Activated T-helper 1 cell treated with anti-CD3 and anti-CD28 coated beads, Interleukin-12 subunit alpha, Interleukin-12 subunit beta, Interleukin-2, Interleukin-4 antibody, amounts not matched to agents 30 ng/mL and 10 ng/mL and 1 ng/mL, durations not matched to agents 14 hours and 24 hours and 36 hours (primary cell): ENCODE measurements at regions of chr13 and their contacts with region 1.

Region 1: DNA sequence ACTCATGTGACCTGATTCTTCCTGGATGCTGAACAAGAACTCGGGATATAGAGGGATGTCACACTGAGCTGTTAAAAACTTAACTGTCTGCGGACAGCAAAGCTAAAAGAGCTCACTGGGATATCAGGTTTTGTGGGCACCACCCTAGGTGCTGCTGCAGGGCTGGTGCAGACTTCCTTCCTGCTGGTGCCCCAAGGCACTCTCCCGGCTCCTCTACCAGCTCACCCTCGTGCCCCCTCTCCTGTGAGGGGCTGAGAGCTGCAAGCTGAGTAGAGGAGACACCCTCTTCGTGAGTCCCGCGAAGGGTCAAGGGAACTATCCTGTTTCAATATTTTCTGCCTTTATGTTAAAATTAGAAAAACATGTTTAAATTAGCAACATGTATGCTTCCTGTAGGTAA is 1475.7 kb downstream of the EFNB2 start:
- DNase-seq: no peak
- H3K4me3 Mint-ChIP-seq: no peak overlapping the region
- H3K27ac Mint-ChIP-seq: no peak overlapping the region
- H3K4me1 Mint-ChIP-seq: no peaks in the 10 kb centered on the region
- H3K27me3 Mint-ChIP-seq: no peaks in the 10 kb centered on the region

Region 2: GRCh38 chr13:104043184-104043583 is 1016.6 kb before region 1 on chr13:
- intact Hi-C with region 1: no loop called
- DNase-seq: no peak
- H3K4me3 Mint-ChIP-seq: no peak overlapping the region
- H3K27ac Mint-ChIP-seq: no peak overlapping the region
- H3K4me1 Mint-ChIP-seq: no peaks in the 10 kb centered on the region
- H3K27me3 Mint-ChIP-seq: no peaks in the 10 kb centered on the region

Region 3: DNA sequence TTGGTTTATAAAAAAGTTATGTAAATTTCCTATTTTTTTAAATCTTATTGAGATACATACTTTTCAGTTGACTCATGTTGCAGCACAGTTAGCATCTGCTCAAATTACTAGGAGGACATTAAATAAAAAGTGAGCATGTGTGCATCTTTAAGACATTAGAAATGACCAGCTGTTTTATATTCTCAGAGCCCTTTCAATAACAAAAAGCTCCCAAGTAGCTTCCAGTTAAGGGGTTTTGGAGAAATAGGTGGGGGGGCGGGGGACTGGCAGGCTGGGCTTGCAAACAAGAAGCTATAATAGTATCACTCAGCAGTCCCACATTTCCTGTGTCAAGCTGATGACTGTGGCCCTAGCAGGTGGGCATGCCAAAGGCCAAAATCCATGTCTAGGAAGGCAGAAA is 280.5 kb before region 1 on chr13:
- intact Hi-C with region 1: no loop called
- DNase-seq: no peak
- H3K4me3 Mint-ChIP-seq: no peak overlapping the region
- H3K27ac Mint-ChIP-seq: no peak overlapping the region
- H3K4me1 Mint-ChIP-seq: no peaks in the 10 kb centered on the region
- H3K27me3 Mint-ChIP-seq: no peaks in the 10 kb centered on the region

Region 4: DNA sequence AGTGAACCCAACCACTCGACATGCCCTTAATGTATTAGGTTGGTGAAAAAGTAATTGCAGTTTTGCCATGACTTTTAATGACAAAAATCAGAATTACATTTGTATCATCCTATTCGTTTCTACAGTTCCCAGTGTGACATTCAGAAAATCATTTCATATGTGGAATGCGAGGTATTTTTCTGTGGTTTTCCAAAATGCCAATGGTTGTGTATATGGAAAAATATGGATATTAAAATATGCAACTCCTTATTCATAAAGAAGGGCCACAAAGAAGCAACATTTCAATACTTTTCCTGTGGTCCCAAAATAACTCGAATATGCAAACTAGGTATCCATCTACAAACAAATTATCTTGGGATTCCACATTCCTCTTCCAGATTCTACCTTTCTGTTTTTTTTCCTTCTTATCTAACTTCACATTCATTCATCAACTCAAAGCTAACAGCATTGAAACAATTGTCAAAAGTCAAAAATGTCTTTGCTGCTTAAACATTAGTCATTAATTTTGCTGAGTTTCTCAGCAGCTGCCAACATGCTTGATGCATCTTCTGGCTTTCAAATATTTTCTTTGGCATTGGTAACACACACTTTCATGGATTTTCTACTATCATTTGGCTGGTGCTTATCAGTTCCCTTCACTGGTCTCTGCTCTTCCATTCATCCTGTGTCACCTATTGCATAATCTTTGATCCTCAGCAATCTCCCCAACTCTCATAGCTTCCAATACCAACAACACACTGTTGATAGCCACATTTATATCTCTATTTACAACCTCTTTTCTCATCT is 30.3 kb after region 1 on chr13:
- intact Hi-C with region 1: loop called (anchors 1 kb)
- DNase-seq: no peak
- H3K4me3 Mint-ChIP-seq: no peak overlapping the region
- H3K27ac Mint-ChIP-seq: no peak overlapping the region
- H3K4me1 Mint-ChIP-seq: no peaks in the 10 kb centered on the region
- H3K27me3 Mint-ChIP-seq: no peaks in the 10 kb centered on the region